ENCODE measurements at regions of chr7 and their contacts with region 1.

Region 1: DNA sequence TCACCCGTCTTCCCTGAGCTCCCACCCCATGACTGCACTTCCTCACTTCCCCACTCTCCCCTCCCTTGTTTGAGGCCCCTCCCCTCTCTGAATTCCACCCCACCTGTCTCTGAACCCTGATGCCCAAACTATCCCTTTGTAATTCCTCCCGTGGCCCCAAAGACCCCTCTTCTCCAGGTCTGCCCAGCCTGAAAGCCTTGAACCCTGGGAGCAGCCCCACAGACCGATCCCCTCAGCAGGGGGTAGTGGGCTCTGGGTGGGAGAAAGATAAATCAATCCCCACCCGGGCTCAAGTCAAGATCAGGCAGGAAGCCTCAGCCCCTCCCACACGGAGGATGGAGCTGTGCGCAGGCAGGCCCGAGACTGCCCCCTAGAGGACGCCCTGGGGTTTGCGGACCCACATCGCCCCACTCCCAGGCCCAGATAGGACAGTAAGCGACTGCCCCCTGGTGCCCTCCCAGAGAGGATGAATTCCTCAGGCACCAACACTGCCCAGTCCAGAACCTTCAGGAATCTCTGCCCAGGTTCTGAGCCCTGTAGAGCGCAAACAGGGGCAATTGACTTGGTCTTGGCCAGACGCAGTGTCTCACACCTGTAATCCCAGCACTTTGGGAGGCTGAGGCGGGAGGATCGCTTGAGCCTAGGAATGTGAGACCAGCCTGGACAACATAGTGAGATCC is 11.7 kb downstream of the HSPB1 start:
- DNase-seq: peak; percentile 76 to 96
- H3K4me3 ChIP-seq: no peak overlapping the region
- H3K27ac ChIP-seq: no peak overlapping the region
- H3K4me1 ChIP-seq: peaks cover 21% of the 10 kb centered on the region
- H3K27me3 ChIP-seq: no peaks in the 10 kb centered on the region
- CTCF ChIP-seq: peak; percentile 99

Region 2: DNA sequence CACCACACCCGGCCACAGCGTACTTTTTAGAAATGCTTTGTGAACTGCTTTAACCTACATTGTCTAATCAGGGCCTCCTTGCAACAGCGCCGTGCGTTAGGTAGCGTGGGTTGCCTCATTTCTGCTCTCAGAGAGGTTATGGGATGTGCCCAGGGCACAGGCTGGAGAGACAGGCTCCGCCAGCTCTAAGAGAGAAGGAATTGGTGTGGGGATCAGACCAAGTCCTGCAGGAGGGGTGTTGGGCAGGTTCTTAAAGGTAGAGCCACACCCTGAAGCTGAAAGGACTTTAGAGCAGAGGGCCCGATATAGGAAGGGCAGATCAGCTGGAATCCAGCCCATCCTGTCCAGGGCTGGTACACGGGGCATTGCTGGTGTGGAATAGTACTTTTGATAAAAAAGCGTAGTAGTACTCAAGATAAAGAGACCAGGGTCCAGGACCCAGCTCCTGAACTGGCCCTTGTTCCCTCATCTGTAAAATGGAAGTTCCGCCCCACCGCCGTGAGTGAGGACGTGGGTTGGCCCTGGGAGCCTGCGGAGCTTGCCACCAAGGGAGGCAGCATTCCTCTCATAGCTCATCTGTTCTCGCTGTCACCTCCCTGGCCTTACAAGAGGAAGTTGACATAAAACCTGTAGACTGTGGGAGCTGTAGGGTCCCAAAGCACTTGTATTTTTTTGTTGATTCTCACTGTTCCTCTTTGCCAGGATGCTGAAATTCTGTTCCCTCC is 357.0 kb before region 1 on chr7:
- CTCF ChIA-PET with region 1: interaction called, 10 read pairs
- POLR2A ChIA-PET with region 1: no interaction called
- intact Hi-C with region 1: no loop called
- DNase-seq: peak; percentile 94 to 99
- H3K4me3 ChIP-seq: peak overlapping the region; percentile 36; the same call in 1 of the 2 replicates
- H3K27ac ChIP-seq: peak overlapping the region; percentile 76
- H3K4me1 ChIP-seq: peaks cover 40% of the 10 kb centered on the region
- H3K27me3 ChIP-seq: no peaks in the 10 kb centered on the region
- CTCF ChIP-seq: no peak

Region 3: DNA sequence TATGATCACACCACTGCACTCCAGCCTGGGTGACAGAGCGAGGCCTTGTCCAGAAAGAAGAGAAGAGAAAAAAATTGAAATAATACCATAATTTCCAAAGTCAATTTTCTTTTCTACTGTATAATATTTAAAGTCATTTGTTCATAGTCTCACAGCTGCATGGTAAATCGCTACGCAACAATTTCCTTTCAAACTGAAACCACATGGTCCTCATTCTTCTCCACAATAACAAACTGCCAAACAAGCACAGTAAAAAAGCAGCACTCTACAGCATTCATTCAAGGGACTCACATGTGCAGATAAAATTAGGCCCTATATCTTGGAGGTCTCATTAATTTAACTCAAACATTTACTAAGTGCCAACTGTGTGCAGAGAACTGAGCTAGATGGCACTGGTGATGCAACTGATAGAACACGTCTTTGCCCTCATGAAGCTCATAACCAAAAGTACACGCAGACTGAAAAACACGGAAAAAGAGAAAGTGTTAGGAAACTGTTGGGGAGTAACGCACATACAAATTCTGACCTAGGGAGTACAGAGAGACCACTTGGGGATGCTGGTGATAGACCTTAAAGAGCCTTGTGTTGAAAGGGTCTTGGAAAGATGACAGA is 180.9 kb before region 1 on chr7:
- CTCF ChIA-PET with region 1: no interaction called
- POLR2A ChIA-PET with region 1: interaction called, 3 read pairs
- intact Hi-C with region 1: loop called (anchors 1 kb)
- DNase-seq: no peak
- H3K4me3 ChIP-seq: no peak overlapping the region
- H3K27ac ChIP-seq: no peak overlapping the region
- H3K4me1 ChIP-seq: no peaks in the 10 kb centered on the region
- H3K27me3 ChIP-seq: no peaks in the 10 kb centered on the region
- CTCF ChIP-seq: no peak

Region 4: GRCh38 chr7:76262683-76263402 is 51.3 kb before region 1 on chr7:
- CTCF ChIA-PET with region 1: interaction called, 9 read pairs
- POLR2A ChIA-PET with region 1: no interaction called
- intact Hi-C with region 1: loop called (anchors 1 kb)
- DNase-seq: peak; percentile 56 to 73
- H3K4me3 ChIP-seq: no peak overlapping the region
- H3K27ac ChIP-seq: no peak overlapping the region
- H3K4me1 ChIP-seq: no peaks in the 10 kb centered on the region
- H3K27me3 ChIP-seq: no peaks in the 10 kb centered on the region
- CTCF ChIP-seq: peak; percentile 83

Region 5: GRCh38 chr7:76297387-76297756 is 16.8 kb before region 1 on chr7:
- CTCF ChIA-PET with region 1: interaction called, 13 read pairs
- POLR2A ChIA-PET with region 1: no interaction called
- intact Hi-C with region 1: no loop called
- DNase-seq: peak; percentile 90 to 94
- H3K4me3 ChIP-seq: no peak overlapping the region
- H3K27ac ChIP-seq: peak overlapping the region; percentile 67
- H3K4me1 ChIP-seq: peaks cover 75% of the 10 kb centered on the region
- H3K27me3 ChIP-seq: no peaks in the 10 kb centered on the region
- CTCF ChIP-seq: no peak

Region 6: DNA sequence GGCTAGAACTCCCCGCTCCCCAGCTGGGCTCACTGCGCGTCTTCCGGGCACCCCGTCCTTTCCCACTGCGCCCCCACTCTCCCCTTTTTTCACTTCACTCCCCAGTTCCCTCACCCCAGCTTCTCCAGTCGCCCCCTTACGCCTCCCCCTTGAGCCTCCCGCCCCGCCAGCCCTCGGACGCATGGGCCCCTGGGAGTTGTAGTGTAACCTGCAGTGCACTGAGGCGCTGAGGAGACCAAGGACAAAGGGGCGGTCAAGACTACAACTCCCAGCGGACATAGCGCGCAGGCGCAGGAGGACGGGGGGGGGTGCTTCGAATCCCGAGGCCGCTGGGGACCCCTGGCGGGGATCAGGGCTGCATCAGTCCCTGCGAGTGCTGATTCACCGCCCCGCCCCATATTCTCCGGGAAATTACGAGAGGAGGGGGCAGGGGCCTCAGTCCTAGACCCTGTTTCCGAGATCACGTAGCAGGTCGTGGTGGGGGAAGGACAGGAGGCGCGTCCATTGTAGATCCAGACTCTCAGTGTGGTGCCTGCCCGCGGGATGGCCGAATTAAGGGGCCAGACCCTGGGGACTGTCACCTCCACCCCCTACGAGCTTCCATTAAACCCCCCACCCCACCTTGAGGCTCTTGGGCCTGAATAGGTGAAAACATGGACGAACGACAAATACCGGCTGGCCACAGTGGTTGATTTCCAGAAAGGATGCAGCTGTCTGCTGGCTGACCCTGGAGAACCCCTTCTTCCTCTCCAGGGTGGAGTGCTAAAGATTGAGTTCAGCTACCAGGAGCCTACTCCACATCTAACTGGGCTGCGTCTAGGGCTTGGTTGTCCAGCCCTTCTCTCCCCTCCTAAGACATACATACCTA is 45.2 kb after region 1 on chr7:
- CTCF ChIA-PET with region 1: interaction called, 20 read pairs
- POLR2A ChIA-PET with region 1: no interaction called
- intact Hi-C with region 1: loop called (anchors 1 kb)
- DNase-seq: peak; percentile 93 to 96
- H3K4me3 ChIP-seq: peak overlapping the region; percentile 73; the same call in 1 of the 2 replicates
- H3K27ac ChIP-seq: peak overlapping the region; percentile 80
- H3K4me1 ChIP-seq: peaks cover 48% of the 10 kb centered on the region
- H3K27me3 ChIP-seq: no peaks in the 10 kb centered on the region
- CTCF ChIP-seq: peak; percentile 69

Region 7: GRCh38 chr7:76393116-76394031 is 79.2 kb after region 1 on chr7:
- CTCF ChIA-PET with region 1: no interaction called
- POLR2A ChIA-PET with region 1: no interaction called
- intact Hi-C with region 1: no loop called
- DNase-seq: peak; percentile 82 to 96
- H3K4me3 ChIP-seq: peak overlapping the region; percentile 91
- H3K27ac ChIP-seq: peak overlapping the region; percentile 37
- H3K4me1 ChIP-seq: peaks cover 18% of the 10 kb centered on the region
- H3K27me3 ChIP-seq: no peaks in the 10 kb centered on the region
- CTCF ChIP-seq: no peak

Region 8: GRCh38 chr7:76515999-76516443 is 201.8 kb after region 1 on chr7:
- CTCF ChIA-PET with region 1: no interaction called
- POLR2A ChIA-PET with region 1: no interaction called
- intact Hi-C with region 1: loop called (anchors 5 kb)
- DNase-seq: peak; percentile 32 to 74
- H3K4me3 ChIP-seq: no peak overlapping the region
- H3K27ac ChIP-seq: no peak overlapping the region
- H3K4me1 ChIP-seq: peaks cover 21% of the 10 kb centered on the region
- H3K27me3 ChIP-seq: no peaks in the 10 kb centered on the region
- CTCF ChIP-seq: peak; percentile 72